Activated CD4-positive, alpha-beta memory T cell treated with anti-CD3 and anti-CD28 coated beads for 36 hours (primary cell): ENCODE measurements at regions of chr11 and their contacts with region 1.

Region 1: GRCh38 chr11:134275534-134276395 is at the start of gene GLB1L3:
- DNase-seq: peak; percentile 86
- H3K4me3 Mint-ChIP-seq: peak within 1 kb of the TSS; percentile 95
- H3K27ac Mint-ChIP-seq: peak within 1 kb of the TSS; percentile 99
- H3K4me1 Mint-ChIP-seq: peaks cover 33% of the 10 kb centered on the region
- H3K27me3 Mint-ChIP-seq: peaks cover 4% of the 10 kb centered on the region
- total RNA-seq, gene GLB1L3: 7.1 to 8.6 TPM

Region 2: GRCh38 chr11:134244655-134245054 is 31.1 kb before region 1 on chr11:
- CTCF ChIA-PET with region 1: interaction called, 11 read pairs
- POLR2A ChIA-PET with region 1: interaction called, 6 read pairs
- intact Hi-C with region 1: no loop called
- DNase-seq: no peak
- H3K4me3 Mint-ChIP-seq: no peak overlapping the region
- H3K27ac Mint-ChIP-seq: no peak overlapping the region
- H3K4me1 Mint-ChIP-seq: peaks cover 12% of the 10 kb centered on the region
- H3K27me3 Mint-ChIP-seq: no peaks in the 10 kb centered on the region

Region 3: DNA sequence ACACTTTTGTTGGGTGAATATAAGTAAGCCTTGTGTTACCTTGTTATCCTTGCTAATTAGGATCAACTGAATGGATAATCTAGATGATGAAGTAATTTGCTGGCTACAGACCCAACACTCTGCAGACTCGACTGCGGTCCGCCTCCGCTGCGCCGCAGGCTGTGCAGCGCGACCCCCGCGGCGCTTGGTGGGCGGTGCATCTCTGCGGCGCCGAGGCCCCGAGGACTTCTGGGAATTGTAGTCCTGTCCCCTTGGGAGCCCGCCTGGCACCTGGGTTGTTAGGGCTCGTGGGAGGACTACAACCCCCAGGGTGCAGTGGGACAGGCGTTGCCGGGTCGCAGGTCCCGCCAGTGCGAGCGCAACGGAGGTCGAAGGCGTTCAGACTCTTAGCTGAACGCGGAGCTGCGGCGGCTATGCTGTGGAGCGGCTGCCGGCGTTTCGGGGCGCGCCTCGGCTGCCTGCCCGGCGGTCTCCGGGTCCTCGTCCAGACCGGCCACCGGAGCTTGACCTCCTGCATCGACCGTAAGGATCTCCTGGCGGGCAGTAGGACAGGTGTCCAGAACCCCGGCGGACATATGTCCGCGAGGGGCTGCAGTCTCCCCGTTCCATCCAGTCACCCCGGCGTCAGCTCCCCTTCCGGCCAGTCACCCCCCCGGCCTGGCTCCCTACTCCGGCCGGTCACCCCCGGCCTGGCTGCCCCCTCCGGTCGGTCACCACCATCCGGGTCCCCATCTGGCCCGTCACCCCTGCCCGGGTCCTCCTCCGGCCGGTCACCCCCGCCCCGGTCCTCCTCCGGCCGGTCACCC is 22.4 kb before region 1 on chr11 and contains the starts of genes ACAD8 and THYN1:
- CTCF ChIA-PET with region 1: interaction called, 20 read pairs
- POLR2A ChIA-PET with region 1: interaction called, 7 read pairs
- intact Hi-C with region 1: loop called (anchors 1 kb)
- DNase-seq: peak; percentile 97
- H3K4me3 Mint-ChIP-seq: peak within 1 kb of the TSS; percentile 89
- H3K27ac Mint-ChIP-seq: peak within 1 kb of the TSS; percentile 89
- H3K4me1 Mint-ChIP-seq: peaks cover 40% of the 10 kb centered on the region
- H3K27me3 Mint-ChIP-seq: no peaks in the 10 kb centered on the region
- total RNA-seq, gene ACAD8: 20.9 to 22.1 TPM
- total RNA-seq, gene THYN1: 74.0 to 74.3 TPM

Region 4: DNA sequence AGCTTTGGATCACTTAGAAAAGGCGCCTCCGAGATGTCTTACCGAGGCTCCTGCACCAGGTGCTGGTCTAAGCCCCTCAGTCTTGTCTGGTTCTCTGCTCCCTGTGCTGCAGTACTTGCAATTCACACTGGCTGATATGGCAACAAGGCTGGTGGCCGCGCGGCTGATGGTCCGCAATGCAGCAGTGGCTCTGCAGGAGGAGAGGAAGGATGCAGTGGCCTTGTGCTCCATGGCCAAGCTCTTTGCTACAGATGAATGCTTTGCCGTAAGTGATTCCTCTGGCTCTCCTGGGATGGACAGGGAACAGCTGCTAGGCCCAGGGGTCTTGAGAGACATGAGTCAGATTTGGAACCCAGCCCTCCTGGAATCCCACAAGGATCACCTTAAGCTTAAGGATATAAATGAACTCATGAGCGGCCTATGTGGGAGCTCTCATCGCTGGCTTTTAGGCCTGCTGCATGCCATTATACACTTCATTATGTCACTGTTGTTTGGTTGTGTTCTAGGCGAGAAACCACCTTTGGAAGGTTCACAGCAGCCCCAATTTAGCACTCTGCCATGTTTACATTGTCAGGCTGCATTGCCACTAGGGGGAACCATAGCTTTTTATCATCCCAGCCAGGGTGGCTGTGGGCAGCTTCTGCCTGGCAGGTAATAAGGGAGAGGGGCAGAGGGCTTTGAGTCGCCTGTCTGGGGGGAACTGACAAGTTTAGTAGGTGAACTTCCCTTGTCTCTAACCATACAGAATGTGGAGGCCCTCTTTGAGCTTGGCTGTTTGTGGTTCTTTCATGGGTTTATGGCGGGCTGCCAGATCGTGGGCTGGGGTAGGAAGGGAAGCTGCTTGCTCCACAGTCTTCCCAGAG is 13.9 kb before region 1 on chr11:
- CTCF ChIA-PET with region 1: interaction called, 26 read pairs
- POLR2A ChIA-PET with region 1: no interaction called
- intact Hi-C with region 1: no loop called
- DNase-seq: peak; percentile 39
- H3K4me3 Mint-ChIP-seq: no peak overlapping the region
- H3K27ac Mint-ChIP-seq: no peak overlapping the region
- H3K4me1 Mint-ChIP-seq: no peaks in the 10 kb centered on the region
- H3K27me3 Mint-ChIP-seq: no peaks in the 10 kb centered on the region

Region 5: GRCh38 chr11:134331354-134332188 is 55.8 kb after region 1 on chr11 and contains the start of gene GLB1L2:
- CTCF ChIA-PET with region 1: interaction called, 6 read pairs
- POLR2A ChIA-PET with region 1: interaction called, 4 read pairs
- intact Hi-C with region 1: loop called (anchors 1 kb)
- DNase-seq: peak; percentile 82
- H3K4me3 Mint-ChIP-seq: peak within 1 kb of the TSS; percentile 67
- H3K27ac Mint-ChIP-seq: no peak within 1 kb of the TSS
- H3K4me1 Mint-ChIP-seq: peaks cover 10% of the 10 kb centered on the region
- H3K27me3 Mint-ChIP-seq: peaks cover 20% of the 10 kb centered on the region
- total RNA-seq, gene GLB1L2: 3.8 to 4.1 TPM

Region 6: GRCh38 chr11:134412203-134413042 is 136.7 kb after region 1 on chr11 and contains the start of gene B3GAT1:
- CTCF ChIA-PET with region 1: no interaction called
- POLR2A ChIA-PET with region 1: no interaction called
- intact Hi-C with region 1: loop called (anchors 10 kb)
- DNase-seq: peak; percentile 33
- H3K4me3 Mint-ChIP-seq: peak within 1 kb of the TSS; percentile 60
- H3K27ac Mint-ChIP-seq: no peak within 1 kb of the TSS
- H3K4me1 Mint-ChIP-seq: peaks cover 8% of the 10 kb centered on the region
- H3K27me3 Mint-ChIP-seq: peaks cover 59% of the 10 kb centered on the region
- total RNA-seq, gene B3GAT1: 0.22 to 0.24 TPM

Region 7: GRCh38 chr11:134584706-134585433 is 309.1 kb after region 1 on chr11:
- CTCF ChIA-PET with region 1: no interaction called
- POLR2A ChIA-PET with region 1: no interaction called
- intact Hi-C with region 1: loop called (anchors 10 kb)
- DNase-seq: no peak
- H3K4me3 Mint-ChIP-seq: no peak overlapping the region
- H3K27ac Mint-ChIP-seq: no peak overlapping the region
- H3K4me1 Mint-ChIP-seq: peaks cover 10% of the 10 kb centered on the region
- H3K27me3 Mint-ChIP-seq: peaks cover 20% of the 10 kb centered on the region